ENCODE measurements at regions of chr9 and their contacts with region 1.

Region 1: GRCh38 chr9:116855883-116856662 is 169.0 kb downstream of the TRIM32 start:
- DNase-seq: peak in 1 of 2 donors; percentile 16
- H3K4me3 ChIP-seq: no peak overlapping the region
- H3K27ac ChIP-seq: no peak overlapping the region
- H3K4me1 ChIP-seq: no peaks in the 10 kb centered on the region
- H3K27me3 ChIP-seq: no peaks in the 10 kb centered on the region
- CTCF ChIP-seq: no peak
- EP300 ChIP-seq: no peak
- POLR2A ChIP-seq: no peak

Region 2: GRCh38 chr9:116741086-116741740 is 114.9 kb before region 1 on chr9:
- intact Hi-C with region 1: loop called (anchors 10 kb)
- DNase-seq: no peak
- H3K4me3 ChIP-seq: no peak overlapping the region
- H3K27ac ChIP-seq: no peak overlapping the region
- H3K4me1 ChIP-seq: peaks cover 0 to 7% (median 2%) of the 10 kb centered on the region in 4 donors
- H3K27me3 ChIP-seq: no peaks in the 10 kb centered on the region
- CTCF ChIP-seq: no peak
- EP300 ChIP-seq: no peak
- POLR2A ChIP-seq: no peak

Region 3: GRCh38 chr9:116806075-116806474 is 50.0 kb before region 1 on chr9:
- intact Hi-C with region 1: no loop called
- DNase-seq: peak in 1 of 2 donors; percentile 64
- H3K4me3 ChIP-seq: no peak overlapping the region
- H3K27ac ChIP-seq: no peak overlapping the region
- H3K4me1 ChIP-seq: no peaks in the 10 kb centered on the region
- H3K27me3 ChIP-seq: no peaks in the 10 kb centered on the region
- CTCF ChIP-seq: no peak
- EP300 ChIP-seq: no peak
- POLR2A ChIP-seq: no peak